Activated CD4-positive, alpha-beta T cell treated with anti-CD3 and anti-CD28 coated beads for 36 hours (primary cell): ENCODE measurements at regions of chr12 and their contacts with region 1.

Region 1: GRCh38 chr12:53025250-53025649 is 19.0 kb downstream of the EIF4B start:
- DNase-seq: no peak
- ATAC-seq: no peak
- H3K4me3 Mint-ChIP-seq: no peak overlapping the region
- H3K27ac Mint-ChIP-seq: no peak overlapping the region
- H3K4me1 Mint-ChIP-seq: no peaks in the 10 kb centered on the region
- H3K27me3 Mint-ChIP-seq: no peaks in the 10 kb centered on the region

Region 2: DNA sequence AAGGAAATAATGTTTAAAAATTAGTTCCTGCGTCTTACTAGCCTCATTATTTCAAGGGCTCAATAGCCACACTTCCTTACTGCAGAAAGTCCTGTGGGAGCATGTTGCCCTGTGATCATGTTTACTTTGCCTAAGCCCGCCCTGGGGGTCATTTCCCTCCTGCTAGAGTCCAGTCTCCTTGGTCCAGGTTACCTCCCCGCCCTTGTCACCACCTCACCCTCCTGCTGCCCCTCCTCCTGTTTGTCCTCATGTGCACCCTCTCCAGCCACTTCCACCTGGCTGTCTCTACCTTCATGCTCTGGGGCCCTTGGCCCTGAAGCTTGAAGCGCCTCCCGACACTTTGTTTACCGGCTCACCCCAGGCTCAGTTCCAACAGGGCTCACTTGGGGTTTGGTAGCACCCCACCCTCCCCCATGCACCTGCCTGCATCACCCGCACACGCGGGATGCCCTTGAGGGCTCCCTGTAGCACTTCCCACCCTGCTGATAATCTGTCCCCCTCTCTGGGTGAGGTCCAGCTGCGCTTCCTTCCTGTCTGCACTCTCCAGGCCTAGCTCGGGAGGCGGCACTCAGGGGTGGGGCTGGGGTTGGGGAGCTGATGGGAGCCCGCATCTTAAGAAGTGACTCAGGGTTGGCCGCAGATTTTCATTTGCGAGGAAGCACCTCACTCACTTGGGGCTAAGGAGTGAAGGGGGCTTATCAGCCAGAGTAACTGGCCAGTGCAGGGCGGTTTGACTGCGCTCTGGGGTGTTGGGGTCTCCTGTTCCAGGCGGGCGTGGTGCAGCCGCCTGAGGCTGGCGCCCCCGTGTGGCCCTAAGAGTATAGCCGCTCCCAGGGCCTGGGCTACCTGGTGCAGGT is 905.6 kb before region 1 on chr12:
- CTCF ChIA-PET with region 1: no interaction called
- POLR2A ChIA-PET with region 1: no interaction called
- intact Hi-C with region 1: no loop called
- DNase-seq: peak; percentile 68
- ATAC-seq: peak; percentile 62
- H3K4me3 Mint-ChIP-seq: no peak overlapping the region
- H3K27ac Mint-ChIP-seq: no peak overlapping the region
- H3K4me1 Mint-ChIP-seq: peaks cover 31% of the 10 kb centered on the region
- H3K27me3 Mint-ChIP-seq: peaks cover 14% of the 10 kb centered on the region

Region 3: GRCh38 chr12:52865090-52865944 is 159.9 kb before region 1 on chr12:
- CTCF ChIA-PET with region 1: no interaction called
- POLR2A ChIA-PET with region 1: no interaction called
- intact Hi-C with region 1: no loop called
- DNase-seq: peak; percentile 56
- ATAC-seq: peak; percentile 39
- H3K4me3 Mint-ChIP-seq: no peak overlapping the region
- H3K27ac Mint-ChIP-seq: no peak overlapping the region
- H3K4me1 Mint-ChIP-seq: peaks cover 12% of the 10 kb centered on the region
- H3K27me3 Mint-ChIP-seq: no peaks in the 10 kb centered on the region

Region 4: DNA sequence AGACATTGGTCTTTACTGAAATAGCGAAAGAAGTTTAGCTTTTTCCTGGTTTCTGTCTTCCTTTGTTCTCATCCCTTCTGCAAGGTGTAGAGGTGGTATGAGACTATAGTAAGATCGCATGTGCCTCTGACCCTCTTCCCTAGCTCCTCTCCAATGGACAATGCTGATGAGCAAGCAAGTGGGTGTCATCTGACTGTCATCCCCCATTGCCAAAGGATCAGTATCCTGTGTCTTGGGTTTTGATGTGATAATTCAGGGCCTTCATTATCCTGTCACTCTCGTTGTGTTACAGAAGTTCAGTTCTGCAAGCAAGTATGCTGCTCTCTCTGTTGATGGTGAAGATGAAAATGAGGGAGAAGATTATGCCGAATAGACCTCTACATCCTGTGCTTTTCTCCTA is 14.6 kb after region 1 on chr12:
- CTCF ChIA-PET with region 1: interaction called, 21 read pairs
- POLR2A ChIA-PET with region 1: no interaction called
- intact Hi-C with region 1: loop called in 1 of 2 experiments (anchors 2 kb)
- DNase-seq: no peak
- ATAC-seq: no peak
- H3K4me3 Mint-ChIP-seq: no peak overlapping the region
- H3K27ac Mint-ChIP-seq: no peak overlapping the region
- H3K4me1 Mint-ChIP-seq: peaks cover 9% of the 10 kb centered on the region
- H3K27me3 Mint-ChIP-seq: no peaks in the 10 kb centered on the region

Region 5: GRCh38 chr12:53465679-53466078 is 440.4 kb after region 1 on chr12:
- CTCF ChIA-PET with region 1: interaction called, 3 read pairs
- POLR2A ChIA-PET with region 1: interaction called, 5 read pairs
- intact Hi-C with region 1: loop called (anchors 5 kb)
- DNase-seq: no peak
- ATAC-seq: no peak
- H3K4me3 Mint-ChIP-seq: no peak overlapping the region
- H3K27ac Mint-ChIP-seq: peak overlapping the region; percentile 15
- H3K4me1 Mint-ChIP-seq: peaks cover 30% of the 10 kb centered on the region
- H3K27me3 Mint-ChIP-seq: no peaks in the 10 kb centered on the region

Region 6: DNA sequence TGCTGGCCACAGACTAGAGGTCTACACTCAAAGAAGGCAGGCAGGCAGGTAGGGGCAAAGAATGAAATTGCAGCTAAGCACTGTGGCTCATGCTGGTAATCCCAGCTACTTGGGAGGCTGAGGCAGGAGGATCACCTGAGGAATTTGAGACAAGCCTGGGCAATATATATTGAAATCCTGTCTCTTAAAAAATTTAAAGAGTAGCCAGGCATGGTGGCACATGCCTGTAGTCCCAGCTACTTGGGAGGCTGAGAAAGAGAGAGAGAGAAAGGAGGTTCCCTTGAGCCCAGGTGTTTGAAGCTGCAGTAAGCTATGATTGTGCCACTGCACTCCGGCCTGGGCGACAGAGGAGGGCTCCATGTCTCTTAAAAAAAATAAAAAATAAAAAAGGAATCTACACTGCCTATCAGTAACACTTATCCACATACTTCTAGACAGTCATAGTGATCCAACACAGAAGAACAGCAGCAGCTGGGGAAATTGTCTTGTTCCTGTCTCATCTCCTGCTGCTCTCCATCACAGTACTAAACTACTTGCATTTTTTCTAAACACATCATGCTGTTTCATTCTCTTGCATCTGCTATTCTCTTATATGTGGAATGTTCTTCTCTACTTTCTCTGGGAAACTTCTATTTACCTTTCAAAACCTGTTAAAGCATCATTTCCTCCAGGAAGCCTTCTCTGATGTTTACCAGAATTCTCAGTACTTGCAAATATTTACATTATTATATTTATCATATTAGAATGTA is 543.7 kb after region 1 on chr12:
- CTCF ChIA-PET with region 1: no interaction called
- POLR2A ChIA-PET with region 1: no interaction called
- intact Hi-C with region 1: no loop called
- DNase-seq: no peak
- ATAC-seq: no peak
- H3K4me3 Mint-ChIP-seq: no peak overlapping the region
- H3K27ac Mint-ChIP-seq: no peak overlapping the region
- H3K4me1 Mint-ChIP-seq: peaks cover 48% of the 10 kb centered on the region
- H3K27me3 Mint-ChIP-seq: no peaks in the 10 kb centered on the region